HEK293T (cell line): ENCODE measurements at regions of chr3 and their contacts with region 1.

Region 1: GRCh38 chr3:183385698-183386613 is 42.5 kb downstream of the MCF2L2 start:
- DNase-seq: peak; percentile 46

Region 2: DNA sequence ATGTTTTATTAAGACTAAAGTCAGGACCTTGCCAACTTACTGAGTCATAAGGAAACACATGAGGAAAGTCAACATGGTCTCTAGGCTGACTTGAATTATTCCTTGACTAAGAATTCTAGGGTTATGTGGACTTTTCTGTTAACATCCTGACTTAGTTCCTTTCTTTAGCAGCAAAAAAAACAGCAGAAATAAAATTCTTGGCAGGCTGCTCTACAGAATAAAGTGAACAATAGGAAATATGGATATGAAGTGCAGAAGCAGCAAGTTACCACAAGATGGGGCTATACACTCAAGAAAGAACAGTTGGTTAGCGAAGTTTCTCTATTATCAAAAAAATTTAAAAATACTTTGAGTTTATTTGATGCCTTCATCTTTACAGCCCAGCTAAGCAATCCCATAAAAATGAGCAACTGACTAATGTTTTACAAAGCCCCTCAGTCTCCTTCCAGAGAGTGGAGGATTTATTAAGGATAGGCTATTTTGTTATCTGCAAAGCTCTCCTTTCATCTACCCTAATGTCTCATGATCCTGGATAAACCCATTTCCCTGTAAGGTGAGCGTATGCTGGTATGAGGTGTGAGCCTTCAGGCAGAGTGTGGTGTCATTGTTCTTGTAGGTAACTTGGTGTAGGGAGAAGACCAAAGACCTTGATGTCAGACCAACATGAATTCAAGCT is 263.6 kb before region 1 on chr3:
- CTCF ChIA-PET with region 1: interaction called, 10 read pairs
- POLR2A ChIA-PET with region 1: no interaction called
- DNase-seq: peak; percentile 26

Region 3: DNA sequence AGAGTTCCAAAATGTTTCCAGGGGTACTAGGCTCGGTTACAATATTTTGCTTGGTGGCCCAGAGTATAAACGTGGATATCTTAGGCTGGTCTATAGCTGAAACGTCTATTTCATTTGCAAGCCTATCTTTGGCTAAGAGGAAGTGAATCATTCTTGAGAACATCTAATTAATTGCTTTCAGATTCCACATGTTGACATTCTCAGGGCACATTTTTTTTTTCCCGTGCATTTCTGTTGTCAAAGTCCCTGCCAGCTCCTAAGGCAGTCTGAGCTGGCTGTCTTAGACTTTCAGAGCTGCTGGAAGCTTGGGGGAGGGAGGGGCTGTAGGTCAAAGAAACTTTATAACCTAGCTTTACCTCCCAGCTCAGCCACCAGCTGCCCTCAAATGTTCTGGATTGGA is 200.3 kb before region 1 on chr3:
- CTCF ChIA-PET with region 1: interaction called, 31 read pairs
- POLR2A ChIA-PET with region 1: no interaction called
- DNase-seq: no peak

Region 4: GRCh38 chr3:183349421-183350157 is 36.4 kb before region 1 on chr3:
- CTCF ChIA-PET with region 1: no interaction called
- POLR2A ChIA-PET with region 1: no interaction called
- DNase-seq: no peak